H1 (cell line): ENCODE measurements at regions of chr7 and their contacts with region 1.

Region 1: GRCh38 chr7:77536413-77537135 is 521 bp upstream of the PTPN12 start:
- DNase-seq: peak; percentile 89 to 96
- H3K4me3 ChIP-seq: peak overlapping the region; percentile 71 to 92 (median 85)
- H3K27ac ChIP-seq: no peak overlapping the region
- H3K4me1 ChIP-seq: peaks cover 0 to 3% (median 1%) of the 10 kb centered on the region in 4 experiments; a peak in 2 of 7 replicates
- H3K27me3 ChIP-seq: no peaks in the 10 kb centered on the region
- CTCF ChIP-seq: no peak
- EP300 ChIP-seq: no peak
- POLR2A ChIP-seq: peak; percentile 56 to 79
- RAD21 ChIP-seq: no peak; a peak in 1 of 4 replicates

Region 2: DNA sequence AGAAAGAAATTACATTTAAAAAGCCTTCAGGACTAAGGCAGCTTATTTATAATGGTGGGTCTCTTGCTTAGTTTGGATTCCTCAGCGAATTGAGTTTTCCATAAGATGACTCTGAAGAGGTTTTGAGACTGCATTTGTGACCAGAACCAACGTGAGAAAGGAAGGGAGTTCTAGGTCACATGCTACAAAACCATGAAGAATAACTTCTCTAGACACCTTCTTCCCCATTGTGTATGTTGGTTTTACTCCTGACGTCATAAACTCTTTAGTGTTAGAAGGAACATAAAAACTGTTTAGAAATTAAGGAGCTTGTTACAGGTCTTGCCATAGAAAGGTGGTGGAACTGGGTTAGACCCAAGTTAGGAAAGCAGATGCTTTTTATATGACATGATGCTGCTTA is 11.6 kb after region 1 on chr7:
- CTCF ChIA-PET with region 1: interaction called, 4 read pairs
- POLR2A ChIA-PET with region 1: interaction called, 15 read pairs
- DNase-seq: no peak
- H3K4me3 ChIP-seq: no peak overlapping the region
- H3K27ac ChIP-seq: no peak overlapping the region
- H3K4me1 ChIP-seq: peaks cover 0 to 3% (median 2%) of the 10 kb centered on the region in 4 experiments; a peak in 2 of 7 replicates
- H3K27me3 ChIP-seq: no peaks in the 10 kb centered on the region
- CTCF ChIP-seq: no peak
- EP300 ChIP-seq: no peak
- POLR2A ChIP-seq: no peak
- RAD21 ChIP-seq: no peak